Breast epithelium (tissue), 4 donors: ENCODE measurements at regions of chr2 and their contacts with region 1.

Region 1: DNA sequence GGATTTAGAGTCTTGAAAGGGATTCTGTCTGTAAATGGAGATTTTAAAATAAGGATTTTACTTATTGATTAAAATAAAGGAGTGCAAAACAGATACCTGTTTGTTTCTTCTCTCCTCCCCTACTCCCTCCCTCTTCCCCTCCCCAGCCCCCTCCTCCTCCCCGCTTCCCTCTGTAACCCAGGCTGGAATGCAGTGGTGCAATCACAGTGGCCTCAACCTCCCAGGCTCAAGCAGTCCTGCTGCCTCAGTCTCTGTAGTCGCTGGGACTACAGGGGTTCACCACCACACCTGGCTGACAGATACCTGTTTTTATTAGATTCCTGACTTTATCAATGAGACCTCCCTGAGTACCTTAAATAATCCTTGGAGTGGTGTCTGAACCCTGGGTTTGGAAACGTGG is 57.1 kb downstream of the OXER1 start:
- DNase-seq: no peak
- H3K4me3 ChIP-seq: no peak overlapping the region
- H3K27ac ChIP-seq: no peak overlapping the region
- H3K4me1 ChIP-seq: no peaks in the 10 kb centered on the region
- H3K27me3 ChIP-seq: no peaks in the 10 kb centered on the region
- CTCF ChIP-seq: no peak
- POLR2A ChIP-seq: no peak

Region 2: GRCh38 chr2:42736598-42737322 is 29.9 kb after region 1 on chr2:
- intact Hi-C with region 1: no loop called
- DNase-seq: no peak
- H3K4me3 ChIP-seq: no peak overlapping the region
- H3K27ac ChIP-seq: no peak overlapping the region
- H3K4me1 ChIP-seq: no peaks in the 10 kb centered on the region
- H3K27me3 ChIP-seq: no peaks in the 10 kb centered on the region
- CTCF ChIP-seq: no peak
- POLR2A ChIP-seq: no peak

Region 3: DNA sequence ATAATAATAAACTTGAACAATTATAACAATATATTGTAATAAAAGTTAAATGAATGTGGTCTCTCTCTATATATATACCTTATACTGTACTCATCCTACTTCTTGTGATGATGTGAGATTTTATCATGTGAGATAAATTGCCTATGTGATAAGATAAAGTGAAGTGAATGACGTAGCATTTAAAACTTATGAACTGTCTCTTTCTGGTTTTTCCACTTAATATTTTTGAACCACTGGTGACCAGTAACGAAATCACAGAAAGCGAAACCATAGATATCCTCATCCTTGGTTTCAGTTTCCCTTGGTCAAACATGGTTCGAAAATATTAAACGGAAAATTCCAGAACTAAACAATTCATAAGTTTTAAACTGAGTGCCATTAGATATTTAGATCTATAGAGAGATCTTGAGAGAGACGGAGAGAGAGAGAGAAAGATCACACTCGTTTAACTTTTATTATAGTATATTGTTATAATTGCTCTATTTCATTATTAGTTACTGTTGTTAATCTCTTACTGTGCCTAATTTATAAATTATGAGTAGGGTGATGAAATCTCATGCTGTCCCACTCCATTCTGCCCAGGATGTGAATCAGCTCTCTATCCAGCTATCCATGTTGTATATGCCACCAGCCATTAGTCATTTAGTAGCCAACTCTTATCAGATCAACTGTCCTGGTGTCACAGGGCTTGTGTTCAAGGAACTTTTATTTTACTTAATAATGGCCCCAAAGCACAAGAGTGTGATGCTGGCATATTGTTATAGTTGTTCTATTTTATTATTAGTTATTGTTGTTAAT is 732.2 kb after region 1 on chr2:
- intact Hi-C with region 1: loop called (anchors 5 kb)
- DNase-seq: no peak
- H3K4me3 ChIP-seq: no peak overlapping the region
- H3K27ac ChIP-seq: no peak overlapping the region
- H3K4me1 ChIP-seq: no peaks in the 10 kb centered on the region
- H3K27me3 ChIP-seq: no peaks in the 10 kb centered on the region
- CTCF ChIP-seq: no peak
- POLR2A ChIP-seq: no peak